HEK293 (cell line): ENCODE measurements at regions of chr1 and their contacts with region 1.

Region 1: DNA sequence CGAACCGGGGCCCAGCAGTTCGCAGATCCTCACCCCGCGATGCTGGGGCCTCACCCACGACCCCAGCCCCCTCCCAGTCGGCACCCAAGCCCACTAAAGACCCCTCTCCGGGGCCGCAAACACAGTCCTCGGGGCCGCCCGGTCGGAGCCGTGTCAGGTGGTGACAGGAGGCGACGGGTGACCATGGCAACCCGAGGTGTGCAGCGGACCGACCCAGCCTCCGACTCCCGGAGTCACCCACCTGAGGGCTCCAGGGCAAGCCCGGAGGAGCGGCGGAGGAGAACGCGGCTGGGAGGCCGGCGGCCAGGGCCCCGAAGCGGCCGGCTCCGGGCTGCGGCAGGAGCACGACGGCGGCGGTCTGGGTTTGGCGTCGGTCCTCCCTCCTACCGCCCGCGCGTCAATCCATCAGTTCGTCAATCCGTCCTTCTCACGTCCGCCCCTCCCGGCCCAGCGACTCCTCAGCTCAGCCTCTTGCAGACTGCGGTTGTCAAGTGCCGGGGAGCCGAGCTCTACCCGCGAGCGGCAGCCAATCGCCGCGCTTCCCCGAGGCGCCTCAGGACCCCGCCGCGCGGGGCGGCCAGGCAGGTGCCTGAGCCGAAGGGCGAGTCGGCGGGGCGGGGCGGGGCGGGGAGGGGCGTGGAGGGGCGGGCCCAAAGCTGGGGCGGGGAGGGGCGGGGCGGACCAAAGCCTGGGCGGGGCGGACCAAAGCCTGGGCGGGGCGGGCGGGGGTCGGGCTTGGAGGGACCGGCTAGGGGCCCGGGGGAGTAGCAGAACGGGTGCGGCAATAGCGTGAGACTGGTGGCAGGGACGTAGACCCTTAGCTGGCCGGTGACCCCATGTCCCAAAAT is at the start of gene WDR47:
- H3K4me3 ChIP-seq: peak within 1 kb of the TSS; percentile 85
- H3K27ac ChIP-seq: peak within 1 kb of the TSS; percentile 75
- H3K4me1 ChIP-seq: no peaks in the 10 kb centered on the region
- CTCF ChIP-seq: no peak; the same call in 1 of the 2 replicates

Region 2: DNA sequence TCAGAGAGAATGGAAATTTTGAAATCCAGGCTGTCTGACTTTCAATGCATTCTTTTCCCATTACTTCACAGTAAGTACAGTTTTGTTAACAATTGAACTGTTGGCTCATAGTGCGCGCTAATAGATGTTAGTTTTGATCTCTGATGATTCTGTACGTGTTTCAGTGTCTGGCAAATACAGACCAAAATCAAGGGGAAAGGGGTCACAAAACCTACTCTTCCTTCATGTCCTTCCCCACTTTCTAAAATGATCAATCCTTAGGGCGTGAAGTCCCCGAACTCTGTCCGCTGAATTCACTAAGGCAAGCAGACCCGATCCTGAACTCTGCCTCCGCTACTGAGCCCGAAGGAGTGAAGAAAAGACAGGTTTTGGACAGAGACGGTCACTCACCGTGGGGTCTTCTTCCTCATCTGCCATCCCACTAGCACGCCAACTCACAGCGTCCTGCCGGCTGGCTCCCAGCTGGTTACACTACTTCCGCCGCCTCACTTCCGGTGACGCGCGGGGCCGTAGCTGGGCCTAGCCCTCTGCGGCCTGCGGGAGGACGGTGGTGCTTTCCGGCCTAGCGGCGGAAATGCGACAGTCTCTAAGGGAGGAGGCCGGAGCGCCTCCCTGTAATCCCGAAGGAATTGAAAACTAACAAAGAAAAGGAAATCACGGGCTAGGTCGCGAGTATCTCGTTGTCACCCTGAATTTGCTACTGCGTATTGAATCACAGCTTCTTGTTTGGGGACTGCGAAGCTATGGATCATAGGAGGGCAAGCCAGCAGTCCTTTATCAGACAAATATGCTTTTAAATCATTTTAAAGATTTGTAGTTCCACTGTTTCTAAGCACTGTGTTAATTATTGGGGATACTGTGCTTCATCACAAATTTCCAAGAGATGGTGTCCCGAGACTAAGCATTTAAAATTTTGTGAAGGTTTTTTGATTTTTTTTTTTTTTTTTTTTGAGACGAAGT is 34.0 kb after region 1 on chr1 and contains the start of gene TAF13:
- CTCF ChIA-PET with region 1: no interaction called
- POLR2A ChIA-PET with region 1: interaction called, 12 read pairs
- H3K4me3 ChIP-seq: peak within 1 kb of the TSS; percentile 97
- H3K27ac ChIP-seq: peak within 1 kb of the TSS; percentile 80
- H3K4me1 ChIP-seq: no peaks in the 10 kb centered on the region
- CTCF ChIP-seq: peak; percentile 74

Region 3: DNA sequence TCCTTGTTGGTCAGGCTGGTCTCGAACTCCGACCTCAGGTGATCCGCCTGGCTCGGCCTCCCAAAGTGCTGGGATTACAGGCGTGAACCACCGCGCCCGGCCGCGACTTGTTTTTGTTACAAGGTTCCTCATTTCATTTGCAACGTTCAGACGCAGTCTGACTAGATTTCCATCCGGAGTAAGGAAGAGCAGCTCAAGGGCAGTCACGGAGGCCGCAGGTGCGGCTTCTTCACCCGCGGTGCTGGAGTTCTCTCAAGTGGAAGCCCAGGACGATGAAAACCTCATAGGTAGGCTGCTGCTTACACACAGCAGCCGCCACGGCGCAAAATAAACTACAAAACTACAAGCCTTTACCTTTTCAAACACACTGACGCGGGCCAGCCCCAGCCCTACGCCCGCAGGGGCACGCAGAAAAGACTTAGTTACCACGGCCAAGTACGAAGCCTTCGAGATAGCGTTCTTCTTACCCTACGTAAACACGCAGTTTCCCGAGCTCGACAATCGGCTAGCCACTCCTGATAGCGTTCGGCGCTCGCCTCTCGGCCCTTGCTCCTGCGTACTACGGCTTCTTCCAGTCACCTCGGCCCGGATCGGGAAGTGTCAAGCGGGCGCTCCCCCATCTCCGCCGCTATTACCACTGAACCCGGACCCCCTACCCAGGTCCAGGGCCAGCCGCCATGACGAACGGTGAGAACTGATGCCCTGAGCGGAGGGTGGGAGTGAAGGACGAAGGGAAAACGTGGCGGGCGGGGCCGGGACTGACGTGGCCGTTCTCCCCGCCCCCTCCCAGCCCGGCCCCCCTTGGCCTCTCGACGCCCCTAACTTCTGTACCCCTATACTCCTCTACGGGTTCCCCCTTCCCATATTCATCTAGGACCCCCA is 48.6 kb after region 1 on chr1 and contains the start of gene TMEM167B:
- CTCF ChIA-PET with region 1: interaction called, 4 read pairs
- POLR2A ChIA-PET with region 1: interaction called, 11 read pairs
- H3K4me3 ChIP-seq: peak within 1 kb of the TSS; percentile 98
- H3K27ac ChIP-seq: peak within 1 kb of the TSS; percentile 64
- H3K4me1 ChIP-seq: no peaks in the 10 kb centered on the region
- CTCF ChIP-seq: no peak